ENCODE measurements at regions of chr14 and their contacts with region 1.

Region 1: GRCh38 chr14:59964251-59965007 is 44.5 kb downstream of the LRRC9 start:
- DNase-seq: no peak
- ATAC-seq: peak in 6 of 8 donors; percentile 12 to 35 (median 26)
- H3K4me3 ChIP-seq: no peak overlapping the region
- H3K27ac ChIP-seq: no peak overlapping the region
- H3K4me1 ChIP-seq: peaks cover 0 to 11% (median 0%) of the 10 kb centered on the region in 9 donors
- H3K27me3 ChIP-seq: no peaks in the 10 kb centered on the region
- CTCF ChIP-seq: no peak

Region 2: GRCh38 chr14:60051721-60052221 is 87.3 kb after region 1 on chr14:
- intact Hi-C with region 1: loop called in 2 of 10 experiments (anchors 2 to 10 kb)
- DNase-seq: no peak
- ATAC-seq: peak in 1 of 8 donors; percentile 20
- H3K4me3 ChIP-seq: no peak overlapping the region
- H3K27ac ChIP-seq: no peak overlapping the region
- H3K4me1 ChIP-seq: peaks cover 0 to 10% (median 0%) of the 10 kb centered on the region in 9 donors
- H3K27me3 ChIP-seq: no peaks in the 10 kb centered on the region
- CTCF ChIP-seq: no peak

Region 3: GRCh38 chr14:60057793-60058486 is 93.5 kb after region 1 on chr14:
- intact Hi-C with region 1: loop called in 6 of 10 experiments (anchors 2 to 10 kb)
- DNase-seq: no peak
- ATAC-seq: no peak
- H3K4me3 ChIP-seq: no peak overlapping the region
- H3K27ac ChIP-seq: no peak overlapping the region
- H3K4me1 ChIP-seq: no peaks in the 10 kb centered on the region
- H3K27me3 ChIP-seq: no peaks in the 10 kb centered on the region
- CTCF ChIP-seq: no peak

Region 4: DNA sequence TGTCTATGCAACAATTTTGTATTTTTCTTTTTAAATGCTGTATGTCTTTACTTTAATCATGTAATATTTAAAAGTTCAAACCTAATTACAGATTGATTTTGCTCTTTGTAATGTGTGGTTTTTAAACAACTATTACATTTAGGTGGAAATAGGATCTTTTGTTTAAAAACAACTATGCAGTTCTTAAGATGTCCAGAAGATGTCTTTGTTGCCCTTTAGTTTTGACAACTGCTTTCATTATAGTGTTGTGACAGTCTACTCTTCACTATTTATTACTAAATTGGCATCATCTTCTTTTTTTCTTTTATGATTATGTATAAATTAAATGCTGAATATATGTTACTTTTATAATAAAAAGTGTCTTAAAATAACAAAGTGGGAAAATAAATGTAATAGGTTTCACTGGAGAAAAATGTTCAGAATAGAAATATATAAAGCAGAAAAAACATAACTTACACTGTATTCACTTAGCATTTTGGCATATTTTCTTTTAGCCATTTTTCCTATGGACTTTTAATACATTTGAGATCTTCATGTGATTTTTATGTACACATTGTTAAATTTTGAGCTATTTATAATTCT is 100.2 kb after region 1 on chr14:
- intact Hi-C with region 1: loop called in 5 of 10 experiments (anchors 5 to 10 kb)
- DNase-seq: no peak
- ATAC-seq: no peak
- H3K4me3 ChIP-seq: no peak overlapping the region
- H3K27ac ChIP-seq: no peak overlapping the region
- H3K4me1 ChIP-seq: no peaks in the 10 kb centered on the region
- H3K27me3 ChIP-seq: no peaks in the 10 kb centered on the region
- CTCF ChIP-seq: peak; percentile 37 to 78 (median 63)

Region 5: GRCh38 chr14:60184146-60184904 is 219.9 kb after region 1 on chr14:
- intact Hi-C with region 1: loop called (anchors 1 to 10 kb)
- DNase-seq: peak in 1 of 2 donors; percentile 32
- ATAC-seq: peak in 4 of 8 donors; percentile 34 to 63 (median 58)
- H3K4me3 ChIP-seq: peak overlapping the region in 9 of 10 donors; percentile 30 to 62 (median 50)
- H3K27ac ChIP-seq: peak overlapping the region in 6 of 10 donors; percentile 18 to 74 (median 42)
- H3K4me1 ChIP-seq: peaks cover 0 to 9% (median 0%) of the 10 kb centered on the region in 9 donors
- H3K27me3 ChIP-seq: no peaks in the 10 kb centered on the region
- CTCF ChIP-seq: peak; percentile 61 to 93 (median 80)